ENCODE measurements at regions of chr1 and their contacts with region 1.

Region 1: GRCh38 chr1:28581536-28582247 is 10.4 kb upstream of the RAB42 start:
- DNase-seq: peak; percentile 100

Region 2: GRCh38 chr1:28518000-28518744 is 63.5 kb before region 1 on chr1:
- CTCF ChIA-PET with region 1: no interaction called
- POLR2A ChIA-PET with region 1: interaction called, 19 read pairs
- DNase-seq: peak; percentile 96

Region 3: DNA sequence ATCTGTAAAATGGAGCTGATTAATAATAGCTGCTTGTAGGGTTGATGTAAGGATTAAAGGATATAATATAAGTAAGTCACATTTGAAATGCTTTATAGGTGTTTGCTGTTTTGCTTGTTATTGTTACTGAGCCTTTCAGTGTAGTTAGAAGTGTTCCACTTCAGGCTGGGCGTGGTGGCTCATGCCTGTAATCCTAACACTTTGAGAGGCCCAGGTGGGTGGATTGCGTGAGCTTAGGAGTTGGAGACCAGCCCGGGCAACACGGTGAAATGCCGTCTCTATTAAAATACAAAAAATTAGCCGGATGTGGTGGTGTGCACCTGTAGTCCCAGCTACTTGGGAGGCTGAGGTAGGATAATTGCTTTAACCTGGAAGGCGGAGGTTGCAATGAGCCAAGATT is 16.7 kb before region 1 on chr1:
- CTCF ChIA-PET with region 1: no interaction called
- POLR2A ChIA-PET with region 1: interaction called, 12 read pairs
- DNase-seq: no peak

Region 4: DNA sequence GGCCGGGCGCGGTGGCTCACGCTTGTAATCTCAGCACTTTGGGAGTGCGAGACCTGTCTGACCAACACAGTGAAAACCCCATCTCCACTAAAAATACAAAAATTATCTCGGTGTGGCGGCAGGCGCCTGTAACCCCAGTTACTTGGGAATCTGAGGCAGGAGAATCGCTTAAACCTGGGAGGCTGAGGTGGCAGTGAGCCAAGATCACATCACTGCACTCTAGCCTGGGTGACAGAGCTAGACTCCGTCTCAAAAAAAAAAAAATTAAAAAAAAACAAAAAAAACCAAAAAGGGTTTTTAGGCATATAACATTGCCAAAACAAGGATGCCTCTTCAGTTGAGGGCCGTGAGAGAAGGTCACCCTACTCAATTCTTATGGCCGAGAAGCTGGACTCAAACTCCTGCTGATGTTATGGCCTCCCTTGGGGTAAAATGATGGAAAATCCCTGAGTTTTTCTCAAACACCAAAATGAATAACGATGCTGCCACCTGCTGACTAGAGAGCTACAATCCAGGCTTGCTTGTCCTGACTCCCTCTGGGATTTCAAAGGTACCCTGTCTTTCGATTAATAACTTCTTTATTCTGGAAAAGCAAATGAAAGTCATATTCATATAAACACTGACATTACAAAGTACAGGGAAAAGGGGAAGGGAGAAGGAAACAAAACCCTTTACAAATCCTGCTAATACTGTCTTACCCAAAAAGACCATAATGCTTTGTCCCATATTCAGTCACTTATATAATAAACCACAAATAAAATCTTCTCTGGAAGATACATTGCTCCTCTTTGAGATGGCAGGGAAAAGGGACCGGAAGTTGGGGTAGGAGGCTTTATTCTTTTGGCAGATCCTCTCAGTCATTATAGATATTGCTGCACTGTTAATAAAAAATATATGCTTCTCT is 21.1 kb after region 1 on chr1:
- CTCF ChIA-PET with region 1: no interaction called
- POLR2A ChIA-PET with region 1: interaction called, 29 read pairs
- DNase-seq: peak; percentile 84

Region 5: DNA sequence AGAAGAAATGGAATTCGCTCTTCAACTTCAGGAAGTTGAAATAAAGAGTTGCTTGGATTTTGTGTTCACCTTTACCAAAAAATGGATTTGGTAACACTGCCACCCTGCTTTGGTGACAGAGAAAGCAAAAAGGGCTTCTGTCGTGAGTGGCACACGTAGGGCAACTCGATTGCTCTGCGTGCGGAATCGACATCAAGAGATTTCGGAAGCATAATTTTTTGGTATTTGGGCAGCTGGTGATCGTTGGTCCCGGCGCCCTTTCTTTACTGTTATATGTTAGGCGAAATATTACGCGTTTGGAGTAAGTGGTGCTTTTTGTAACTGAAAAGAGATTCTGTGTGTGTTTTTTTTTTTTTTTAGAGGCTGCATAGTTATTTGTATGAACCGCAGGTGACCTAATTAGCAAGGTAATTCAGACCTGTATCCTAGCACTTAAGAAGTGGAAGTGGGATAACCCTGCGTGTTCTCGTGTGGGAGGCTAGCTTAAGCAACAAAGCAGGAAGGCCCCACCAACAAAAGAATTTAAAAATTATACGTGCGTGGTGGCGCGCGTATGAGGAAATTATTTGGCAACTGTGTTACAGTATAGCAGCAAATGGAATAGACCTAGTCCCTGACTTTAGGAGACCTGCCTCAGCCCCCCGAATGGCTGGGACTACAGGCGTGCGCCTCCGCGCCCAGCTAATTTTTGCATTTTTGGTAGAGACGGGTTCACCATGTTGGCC is 66.9 kb after region 1 on chr1 and contains the start of gene RNU11:
- CTCF ChIA-PET with region 1: no interaction called
- POLR2A ChIA-PET with region 1: interaction called, 22 read pairs
- DNase-seq: peak; percentile 79

Measured in HEK293T (cell line).